ENCODE measurements at regions of chr21 and their contacts with region 1.

Region 1: DNA sequence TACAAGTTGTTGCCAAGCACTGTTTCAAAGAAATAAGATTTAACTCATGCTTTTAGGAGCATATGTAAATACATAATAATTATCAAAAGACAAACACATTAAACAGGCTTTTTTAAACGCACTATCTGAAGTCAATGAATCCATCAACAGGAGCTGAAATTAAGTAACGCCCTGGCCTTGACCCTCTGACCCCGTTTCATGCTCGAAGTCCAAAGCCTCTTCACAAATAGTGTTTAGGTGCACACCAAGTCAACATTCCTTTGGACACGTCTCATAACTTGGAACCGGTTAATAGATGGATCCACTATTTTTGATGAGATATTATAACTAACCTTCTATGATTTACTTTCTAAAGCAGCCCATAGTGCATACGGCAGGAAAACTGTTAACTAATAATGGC is 209.3 kb downstream of the GABPA start:
- DNase-seq: no peak
- ATAC-seq: no peak
- H3K4me3 Mint-ChIP-seq: no peak overlapping the region
- H3K27ac Mint-ChIP-seq: no peak overlapping the region
- H3K4me1 Mint-ChIP-seq: peaks cover under 1% of the 10 kb centered on the region
- H3K27me3 Mint-ChIP-seq: no peaks in the 10 kb centered on the region
- CTCF ChIP-seq: no peak

Region 2: GRCh38 chr21:25963181-25963580 is 19.1 kb after region 1 on chr21:
- CTCF ChIA-PET with region 1: no interaction called
- POLR2A ChIA-PET with region 1: no interaction called
- intact Hi-C with region 1: no loop called
- DNase-seq: no peak
- ATAC-seq: no peak
- H3K4me3 Mint-ChIP-seq: no peak overlapping the region
- H3K27ac Mint-ChIP-seq: no peak overlapping the region
- H3K4me1 Mint-ChIP-seq: peaks cover 50% of the 10 kb centered on the region
- H3K27me3 Mint-ChIP-seq: no peaks in the 10 kb centered on the region
- CTCF ChIP-seq: no peak

Region 3: GRCh38 chr21:25986928-25987327 is 42.8 kb after region 1 on chr21:
- CTCF ChIA-PET with region 1: no interaction called
- POLR2A ChIA-PET with region 1: no interaction called
- intact Hi-C with region 1: no loop called
- DNase-seq: no peak
- ATAC-seq: no peak
- H3K4me3 Mint-ChIP-seq: no peak overlapping the region
- H3K27ac Mint-ChIP-seq: no peak overlapping the region
- H3K4me1 Mint-ChIP-seq: no peaks in the 10 kb centered on the region
- H3K27me3 Mint-ChIP-seq: no peaks in the 10 kb centered on the region
- CTCF ChIP-seq: no peak

Region 4: DNA sequence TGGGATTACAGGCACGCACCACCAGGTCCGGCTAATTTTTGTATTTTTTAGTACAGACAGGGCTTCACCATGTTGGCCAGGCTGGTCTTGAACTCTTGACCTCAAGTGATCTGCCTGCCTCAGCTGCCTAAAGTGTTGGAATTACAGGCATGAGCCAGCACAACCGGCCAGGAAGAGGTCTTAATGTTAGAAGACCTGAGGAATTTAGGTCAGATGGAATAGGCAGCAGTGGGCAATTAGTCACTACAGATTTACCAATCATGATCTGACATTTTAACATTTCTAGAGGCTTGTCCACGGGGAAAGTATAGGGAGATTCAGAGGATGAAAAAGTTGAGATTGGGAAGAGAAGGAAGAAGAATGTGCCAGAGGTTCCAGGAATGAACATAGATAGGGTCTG is 235.4 kb after region 1 on chr21:
- CTCF ChIA-PET with region 1: no interaction called
- POLR2A ChIA-PET with region 1: interaction called, 10 read pairs
- intact Hi-C with region 1: no loop called
- DNase-seq: no peak
- ATAC-seq: no peak
- H3K4me3 Mint-ChIP-seq: no peak overlapping the region
- H3K27ac Mint-ChIP-seq: no peak overlapping the region
- H3K4me1 Mint-ChIP-seq: peaks cover 9% of the 10 kb centered on the region
- H3K27me3 Mint-ChIP-seq: peaks cover 11% of the 10 kb centered on the region
- CTCF ChIP-seq: no peak